H1 (cell line): ENCODE measurements at regions of chr2 and their contacts with region 1.

Region 1: DNA sequence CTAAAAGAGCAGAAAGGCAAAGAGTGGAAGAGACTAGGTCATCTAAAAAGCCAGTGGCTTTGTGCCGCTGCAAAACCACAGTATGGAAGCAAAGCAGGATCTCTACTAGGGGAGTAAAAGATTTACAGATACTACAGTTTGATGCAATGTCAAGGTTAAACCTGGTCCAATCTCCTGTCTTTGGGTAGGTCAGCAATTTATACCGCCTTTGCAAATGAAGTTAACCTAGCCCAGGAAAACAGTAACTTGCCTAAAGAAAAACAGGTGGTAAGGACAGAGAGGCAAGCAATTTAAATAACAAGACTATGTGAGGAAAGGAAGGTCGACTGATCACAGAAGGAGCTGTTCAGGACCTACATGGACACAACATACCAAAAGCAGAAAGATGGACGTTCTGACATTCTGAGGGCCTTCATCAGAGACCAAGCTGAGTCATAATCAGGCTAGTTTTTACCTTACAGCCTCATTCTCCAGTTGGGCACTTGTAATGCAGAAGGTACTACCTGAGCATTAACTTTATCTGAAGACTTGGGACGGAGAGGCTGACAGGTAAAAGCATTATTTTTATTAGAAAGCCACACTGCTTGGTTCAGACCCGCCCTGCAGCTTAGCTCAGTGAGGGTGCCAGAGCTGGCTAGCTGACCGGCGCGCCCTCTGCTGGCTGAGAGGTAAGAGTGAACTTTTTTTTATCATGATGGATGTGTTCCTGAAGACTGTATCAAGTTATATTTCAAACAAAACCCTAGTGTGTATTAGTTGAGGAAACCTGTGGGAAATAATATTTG is 15.9 kb downstream of the CDKL4 start:
- DNase-seq: peak in 1 of 2 experiments; percentile 80
- H3K4me3 ChIP-seq: peak overlapping the region in 2 of 4 experiments; percentile 36 to 58; a peak in 3 of 8 replicates
- H3K27ac ChIP-seq: no peak overlapping the region
- H3K4me1 ChIP-seq: peaks cover 0 to 5% (median 3%) of the 10 kb centered on the region in 4 experiments; a peak in 4 of 7 replicates
- H3K27me3 ChIP-seq: no peaks in the 10 kb centered on the region
- CTCF ChIP-seq: peak; percentile 79 to 82 (median 80)
- EP300 ChIP-seq: no peak
- POLR2A ChIP-seq: no peak
- RAD21 ChIP-seq: peak; percentile 84 to 89

Region 2: GRCh38 chr2:38947240-38948239 is 280.3 kb before region 1 on chr2:
- CTCF ChIA-PET with region 1: interaction called, 64 read pairs
- POLR2A ChIA-PET with region 1: interaction called, 3 read pairs
- DNase-seq: peak; percentile 43 to 80
- H3K4me3 ChIP-seq: no peak overlapping the region
- H3K27ac ChIP-seq: no peak overlapping the region
- H3K4me1 ChIP-seq: peaks cover 0 to 2% (median 1%) of the 10 kb centered on the region in 4 experiments; a peak in 2 of 7 replicates
- H3K27me3 ChIP-seq: no peaks in the 10 kb centered on the region
- CTCF ChIP-seq: peak; percentile 76 to 90 (median 85)
- EP300 ChIP-seq: no peak
- POLR2A ChIP-seq: no peak
- RAD21 ChIP-seq: peak; percentile 84 to 87

Region 3: DNA sequence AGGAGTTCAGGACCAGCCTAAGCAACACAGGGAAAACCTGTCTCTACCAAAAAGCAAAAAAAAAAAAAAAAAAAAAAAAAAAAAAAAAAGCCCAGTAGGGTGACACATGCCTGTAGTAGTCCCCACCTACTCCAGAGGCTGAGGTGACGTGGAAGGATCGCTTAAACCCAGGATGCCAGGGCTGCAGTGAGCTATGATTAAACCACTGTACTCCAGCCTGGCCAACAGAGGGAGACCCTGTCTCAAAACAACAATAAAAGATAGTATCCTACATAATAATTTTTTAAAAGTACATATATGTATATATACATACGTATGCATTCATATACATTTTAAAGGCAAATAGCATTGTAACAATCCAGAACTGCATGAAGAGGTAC is 158.7 kb before region 1 on chr2:
- CTCF ChIA-PET with region 1: interaction called, 196 read pairs
- POLR2A ChIA-PET with region 1: interaction called, 3 read pairs
- DNase-seq: no peak
- H3K4me3 ChIP-seq: no peak overlapping the region
- H3K27ac ChIP-seq: no peak overlapping the region
- H3K4me1 ChIP-seq: peaks cover 0 to 3% (median 0%) of the 10 kb centered on the region in 4 experiments; a peak in 1 of 7 replicates
- H3K27me3 ChIP-seq: no peaks in the 10 kb centered on the region
- CTCF ChIP-seq: 0 out of 4 replicates have a peak, but pooled peaks of 1 of the 3 experiments have one; percentile 1
- EP300 ChIP-seq: no peak
- POLR2A ChIP-seq: no peak
- RAD21 ChIP-seq: no peak

Region 4: GRCh38 chr2:39203382-39203781 is 24.4 kb before region 1 on chr2:
- CTCF ChIA-PET with region 1: interaction called, 24 read pairs
- POLR2A ChIA-PET with region 1: no interaction called
- DNase-seq: no peak
- H3K4me3 ChIP-seq: no peak overlapping the region
- H3K27ac ChIP-seq: no peak overlapping the region
- H3K4me1 ChIP-seq: peaks cover 0 to 6% (median 4%) of the 10 kb centered on the region in 4 experiments; a peak in 3 of 7 replicates
- H3K27me3 ChIP-seq: no peaks in the 10 kb centered on the region
- CTCF ChIP-seq: no peak
- EP300 ChIP-seq: no peak
- POLR2A ChIP-seq: no peak
- RAD21 ChIP-seq: no peak

Region 5: GRCh38 chr2:39216346-39217191 is 11.3 kb before region 1 on chr2:
- CTCF ChIA-PET with region 1: interaction called, 38 read pairs
- POLR2A ChIA-PET with region 1: no interaction called
- DNase-seq: no peak
- H3K4me3 ChIP-seq: no peak overlapping the region
- H3K27ac ChIP-seq: no peak overlapping the region
- H3K4me1 ChIP-seq: no peaks in the 10 kb centered on the region; a peak in 3 of 7 replicates
- H3K27me3 ChIP-seq: no peaks in the 10 kb centered on the region
- CTCF ChIP-seq: no peak
- EP300 ChIP-seq: no peak
- POLR2A ChIP-seq: no peak
- RAD21 ChIP-seq: no peak

Region 6: GRCh38 chr2:39300044-39300978 is 72.5 kb after region 1 on chr2:
- CTCF ChIA-PET with region 1: no interaction called
- POLR2A ChIA-PET with region 1: no interaction called
- DNase-seq: no peak
- H3K4me3 ChIP-seq: no peak overlapping the region
- H3K27ac ChIP-seq: no peak overlapping the region
- H3K4me1 ChIP-seq: peaks cover 0 to 5% (median 1%) of the 10 kb centered on the region in 4 experiments; a peak in 2 of 7 replicates
- H3K27me3 ChIP-seq: no peaks in the 10 kb centered on the region
- CTCF ChIP-seq: no peak
- EP300 ChIP-seq: no peak
- POLR2A ChIP-seq: no peak
- RAD21 ChIP-seq: no peak